ENCODE measurements at regions of chr5 and their contacts with region 1.

Region 1: DNA sequence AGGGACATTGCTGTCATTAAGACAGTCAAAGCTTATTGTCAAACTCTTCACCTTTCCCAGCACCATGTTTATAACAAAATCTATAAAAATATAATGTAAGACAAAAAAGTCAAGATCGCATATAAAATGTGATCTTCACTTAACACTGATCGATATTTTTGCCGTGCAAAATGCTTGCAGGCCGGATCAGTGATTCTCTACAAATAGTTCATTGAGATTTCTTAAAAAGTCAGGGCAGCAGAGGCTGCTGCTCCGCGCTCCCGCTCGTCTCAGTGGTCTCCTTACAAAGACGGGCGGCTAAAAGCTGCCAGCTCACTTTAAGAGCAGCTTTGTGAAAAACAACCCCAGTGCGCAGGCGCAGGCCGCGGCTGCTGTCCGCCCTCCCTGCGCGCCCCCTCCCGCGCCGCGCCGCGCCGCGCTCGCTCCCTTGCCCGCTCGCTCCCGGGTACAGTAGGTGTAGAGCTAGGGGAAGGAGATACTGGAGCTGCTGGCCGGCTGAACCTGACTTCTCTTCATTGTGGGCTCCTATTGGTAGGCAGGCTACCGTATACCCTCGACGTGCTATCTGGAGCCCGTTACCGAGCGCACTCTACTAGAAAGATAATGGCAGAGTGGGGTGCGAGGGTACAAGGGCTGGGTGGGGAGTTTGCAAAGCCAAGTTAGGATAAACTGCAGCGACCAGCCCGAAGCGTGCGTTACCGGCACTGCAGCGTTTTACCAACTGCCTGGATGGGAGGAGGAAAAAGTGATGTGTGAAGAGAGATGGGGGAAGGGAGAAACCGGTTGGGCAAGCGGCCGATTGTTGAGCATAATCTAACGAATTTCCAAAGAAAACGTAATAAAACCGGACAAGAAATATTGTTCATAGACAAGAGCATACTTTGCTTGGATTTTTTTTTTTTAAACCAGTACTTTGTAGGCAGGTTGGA is at the start of gene ARRDC3:
- DNase-seq: peak; percentile 95 to 97 (median 96)
- H3K4me3 ChIP-seq: peak within 1 kb of the TSS; percentile 81 to 100
- H3K4me3 Mint-ChIP-seq: peak within 1 kb of the TSS; percentile 94 to 100 (median 99)
- H3K27ac ChIP-seq: peak within 1 kb of the TSS; percentile 100
- H3K27ac Mint-ChIP-seq: peak within 1 kb of the TSS; percentile 91 to 100 (median 99)
- H3K4me1 ChIP-seq: peaks cover 21% of the 10 kb centered on the region
- H3K4me1 Mint-ChIP-seq: peaks cover 22 to 34% (median 25%) of the 10 kb centered on the region in 4 donors
- H3K27me3 ChIP-seq: no peaks in the 10 kb centered on the region
- H3K27me3 Mint-ChIP-seq: no peaks in the 10 kb centered on the region
- total RNA-seq, gene ARRDC3: 123 to 130 TPM

Region 2: DNA sequence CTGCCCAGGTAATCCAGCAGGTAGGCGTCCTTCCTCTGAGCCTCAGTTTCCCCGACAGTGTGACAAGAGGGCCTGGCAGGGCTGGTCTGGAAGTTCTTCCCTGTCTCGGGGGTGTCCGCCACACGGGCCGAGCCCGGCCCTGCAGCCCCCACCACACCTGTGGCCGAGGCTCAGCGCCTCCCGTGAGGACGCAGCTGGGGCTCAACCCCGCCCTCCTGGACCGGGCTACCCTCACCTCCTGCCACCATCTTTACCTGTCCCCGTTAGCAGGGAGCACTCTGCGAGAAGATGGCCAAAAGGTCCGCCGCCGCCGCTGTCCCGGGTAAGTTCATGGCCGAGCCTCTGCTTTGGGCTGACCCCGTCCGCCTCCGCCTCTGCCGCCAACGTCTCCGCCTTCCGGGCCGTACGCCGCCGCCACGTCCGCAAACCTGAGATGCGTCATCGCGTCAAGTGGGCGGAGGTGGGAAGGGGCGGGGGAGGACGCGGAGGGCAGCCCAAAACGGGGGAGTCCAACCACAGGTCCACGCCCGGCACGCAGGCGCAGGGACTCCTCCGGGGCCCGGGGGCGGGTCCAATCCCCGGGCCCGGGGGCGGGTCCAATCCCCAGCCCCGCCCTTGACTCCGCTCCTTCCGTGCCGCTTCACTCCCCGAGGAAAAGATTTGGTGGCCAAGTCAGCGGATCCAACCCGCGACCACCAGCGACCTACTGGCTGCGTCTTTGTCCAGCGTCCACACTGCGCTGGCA is 853.9 kb before region 1 on chr5 and contains the start of gene LYSMD3:
- CTCF ChIA-PET with region 1: no interaction called
- POLR2A ChIA-PET with region 1: interaction called, 14 read pairs
- intact Hi-C with region 1: no loop called
- DNase-seq: peak; percentile 95 to 97 (median 96)
- H3K4me3 ChIP-seq: peak within 1 kb of the TSS; percentile 83 to 93
- H3K4me3 Mint-ChIP-seq: peak within 1 kb of the TSS; percentile 97 to 100 (median 99)
- H3K27ac ChIP-seq: peak within 1 kb of the TSS; percentile 98
- H3K27ac Mint-ChIP-seq: peak within 1 kb of the TSS; percentile 97 to 100 (median 99)
- H3K4me1 ChIP-seq: peaks cover 35% of the 10 kb centered on the region
- H3K4me1 Mint-ChIP-seq: peaks cover 25 to 42% (median 34%) of the 10 kb centered on the region in 4 donors
- H3K27me3 ChIP-seq: no peaks in the 10 kb centered on the region
- H3K27me3 Mint-ChIP-seq: peaks cover 9 to 12% of the 10 kb centered on the region in 2 donors
- total RNA-seq, gene LYSMD3: 30.1 to 30.9 TPM

Region 3: GRCh38 chr5:91101600-91102379 is 281.5 kb before region 1 on chr5:
- CTCF ChIA-PET with region 1: interaction called, 16 read pairs
- POLR2A ChIA-PET with region 1: no interaction called
- intact Hi-C with region 1: no loop called
- DNase-seq: peak; percentile 23 to 49 (median 35)
- H3K4me3 ChIP-seq: no peak overlapping the region
- H3K4me3 Mint-ChIP-seq: no peak overlapping the region
- H3K27ac ChIP-seq: no peak overlapping the region
- H3K27ac Mint-ChIP-seq: no peak overlapping the region
- H3K4me1 ChIP-seq: no peaks in the 10 kb centered on the region
- H3K4me1 Mint-ChIP-seq: no peaks in the 10 kb centered on the region
- H3K27me3 ChIP-seq: no peaks in the 10 kb centered on the region
- H3K27me3 Mint-ChIP-seq: peaks cover 4 to 5% of the 10 kb centered on the region in 2 donors

Region 4: DNA sequence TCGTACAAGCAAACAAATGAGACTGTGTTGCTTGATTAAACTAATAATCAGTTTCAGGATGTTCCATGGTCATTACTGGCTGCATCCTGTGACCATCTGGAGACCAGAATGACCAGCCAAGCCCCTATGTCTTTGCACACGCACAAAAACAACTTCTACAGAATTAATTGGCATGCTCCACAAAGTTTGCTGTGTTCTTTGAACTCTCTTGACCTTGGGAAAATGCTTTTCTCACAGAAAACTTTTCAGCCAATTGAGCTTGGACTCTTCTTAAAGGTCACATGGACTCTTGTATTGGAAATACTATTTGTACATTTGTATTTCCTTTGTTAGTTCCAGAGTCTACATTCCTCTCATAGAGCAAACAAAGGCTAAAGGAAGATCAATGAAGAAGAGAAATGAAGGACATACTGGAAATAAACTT is 148.0 kb before region 1 on chr5:
- CTCF ChIA-PET with region 1: interaction called, 48 read pairs
- POLR2A ChIA-PET with region 1: interaction called, 12 read pairs
- intact Hi-C with region 1: no loop called
- DNase-seq: no peak
- H3K4me3 ChIP-seq: no peak overlapping the region
- H3K4me3 Mint-ChIP-seq: no peak overlapping the region
- H3K27ac ChIP-seq: no peak overlapping the region
- H3K27ac Mint-ChIP-seq: no peak overlapping the region
- H3K4me1 ChIP-seq: no peaks in the 10 kb centered on the region
- H3K4me1 Mint-ChIP-seq: no peaks in the 10 kb centered on the region
- H3K27me3 ChIP-seq: no peaks in the 10 kb centered on the region
- H3K27me3 Mint-ChIP-seq: peaks cover 0 to 3% of the 10 kb centered on the region in 2 donors

Region 5: GRCh38 chr5:91280362-91281269 is 102.7 kb before region 1 on chr5:
- CTCF ChIA-PET with region 1: interaction called, 38 read pairs
- POLR2A ChIA-PET with region 1: interaction called, 107 read pairs
- intact Hi-C with region 1: loop called (anchors 1 kb)
- DNase-seq: peak; percentile 76 to 90 (median 80)
- H3K4me3 ChIP-seq: peak overlapping the region; percentile 74 to 91
- H3K4me3 Mint-ChIP-seq: peak overlapping the region; percentile 85 to 99 (median 93)
- H3K27ac ChIP-seq: peak overlapping the region; percentile 37
- H3K27ac Mint-ChIP-seq: peak overlapping the region; percentile 80 to 97 (median 94)
- H3K4me1 ChIP-seq: peaks cover 14% of the 10 kb centered on the region
- H3K4me1 Mint-ChIP-seq: peaks cover 13 to 24% (median 19%) of the 10 kb centered on the region in 4 donors
- H3K27me3 ChIP-seq: no peaks in the 10 kb centered on the region
- H3K27me3 Mint-ChIP-seq: no peaks in the 10 kb centered on the region

Region 6: GRCh38 chr5:91397791-91398190 is 14.5 kb after region 1 on chr5:
- CTCF ChIA-PET with region 1: interaction called, 15 read pairs
- POLR2A ChIA-PET with region 1: interaction called, 5 read pairs
- intact Hi-C with region 1: no loop called
- DNase-seq: no peak
- H3K4me3 ChIP-seq: no peak overlapping the region
- H3K4me3 Mint-ChIP-seq: no peak overlapping the region
- H3K27ac ChIP-seq: no peak overlapping the region
- H3K27ac Mint-ChIP-seq: peak overlapping the region in 1 of 7 donors; percentile 37
- H3K4me1 ChIP-seq: no peaks in the 10 kb centered on the region
- H3K4me1 Mint-ChIP-seq: peaks cover 0 to 5% (median under 1%) of the 10 kb centered on the region in 4 donors
- H3K27me3 ChIP-seq: no peaks in the 10 kb centered on the region
- H3K27me3 Mint-ChIP-seq: no peaks in the 10 kb centered on the region

Region 7: GRCh38 chr5:91670122-91670521 is 286.8 kb after region 1 on chr5:
- CTCF ChIA-PET with region 1: no interaction called
- POLR2A ChIA-PET with region 1: no interaction called
- intact Hi-C with region 1: no loop called
- DNase-seq: no peak
- H3K4me3 ChIP-seq: no peak overlapping the region
- H3K4me3 Mint-ChIP-seq: no peak overlapping the region
- H3K27ac ChIP-seq: no peak overlapping the region
- H3K27ac Mint-ChIP-seq: no peak overlapping the region
- H3K4me1 ChIP-seq: no peaks in the 10 kb centered on the region
- H3K4me1 Mint-ChIP-seq: no peaks in the 10 kb centered on the region
- H3K27me3 ChIP-seq: no peaks in the 10 kb centered on the region
- H3K27me3 Mint-ChIP-seq: no peaks in the 10 kb centered on the region

Region 8: GRCh38 chr5:91754990-91755389 is 371.7 kb after region 1 on chr5:
- CTCF ChIA-PET with region 1: no interaction called
- POLR2A ChIA-PET with region 1: no interaction called
- intact Hi-C with region 1: no loop called
- DNase-seq: no peak
- H3K4me3 ChIP-seq: no peak overlapping the region
- H3K4me3 Mint-ChIP-seq: no peak overlapping the region
- H3K27ac ChIP-seq: no peak overlapping the region
- H3K27ac Mint-ChIP-seq: no peak overlapping the region
- H3K4me1 ChIP-seq: no peaks in the 10 kb centered on the region
- H3K4me1 Mint-ChIP-seq: no peaks in the 10 kb centered on the region
- H3K27me3 ChIP-seq: no peaks in the 10 kb centered on the region
- H3K27me3 Mint-ChIP-seq: no peaks in the 10 kb centered on the region